Calu3 (cell line): ENCODE measurements at regions of chr4 and their contacts with region 1.

Region 1: DNA sequence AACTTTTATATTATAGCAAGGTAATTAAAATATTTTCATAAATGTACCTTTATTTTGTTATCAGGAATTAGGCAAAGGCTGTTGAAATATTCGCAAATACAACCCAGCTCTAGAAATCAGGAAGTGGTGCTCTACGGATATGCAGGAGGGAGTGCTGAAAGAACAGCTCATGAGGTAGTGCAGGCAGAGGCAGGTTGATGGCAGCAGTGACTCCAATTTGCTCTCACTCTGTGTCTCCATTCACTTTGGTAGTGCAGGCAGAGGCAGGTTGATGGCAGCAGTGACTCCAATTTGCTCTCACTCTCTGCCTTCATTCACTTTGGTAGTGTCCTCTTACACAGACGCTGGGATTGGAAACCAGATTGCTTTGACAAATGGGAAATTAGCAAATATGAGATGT is 277.9 kb downstream of the TRIML1 start:
- DNase-seq: no peak
- H3K4me3 Mint-ChIP-seq: no peak overlapping the region
- H3K27ac Mint-ChIP-seq: no peak overlapping the region
- H3K4me1 Mint-ChIP-seq: no peaks in the 10 kb centered on the region
- H3K27me3 Mint-ChIP-seq: no peaks in the 10 kb centered on the region
- CTCF ChIP-seq: no peak

Region 2: GRCh38 chr4:188341428-188341827 is 75.8 kb before region 1 on chr4:
- CTCF ChIA-PET with region 1: no interaction called
- intact Hi-C with region 1: no loop called
- DNase-seq: no peak
- H3K4me3 Mint-ChIP-seq: no peak overlapping the region
- H3K27ac Mint-ChIP-seq: no peak overlapping the region
- H3K4me1 Mint-ChIP-seq: no peaks in the 10 kb centered on the region
- H3K27me3 Mint-ChIP-seq: no peaks in the 10 kb centered on the region
- CTCF ChIP-seq: no peak

Region 3: DNA sequence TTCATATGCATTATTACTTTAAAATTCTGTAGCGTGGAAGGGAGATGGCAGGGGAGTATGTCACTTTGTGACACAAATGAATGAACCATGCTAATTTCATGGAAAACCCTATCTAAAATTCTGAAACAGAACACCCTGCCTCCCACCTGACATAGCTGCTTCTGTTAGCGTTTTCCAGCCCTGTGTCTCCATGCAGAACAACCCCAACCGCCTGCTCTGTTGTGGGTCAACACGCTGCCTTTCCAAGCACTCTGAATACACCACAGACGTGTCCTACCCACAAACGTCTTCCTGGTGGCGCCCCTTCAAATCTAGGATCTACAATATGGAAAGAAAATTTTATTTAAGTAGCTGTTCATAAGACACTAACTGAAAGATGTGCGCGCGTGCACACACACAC is 39.4 kb before region 1 on chr4:
- CTCF ChIA-PET with region 1: no interaction called
- intact Hi-C with region 1: loop called (anchors 2 kb)
- DNase-seq: no peak
- H3K4me3 Mint-ChIP-seq: no peak overlapping the region
- H3K27ac Mint-ChIP-seq: no peak overlapping the region
- H3K4me1 Mint-ChIP-seq: no peaks in the 10 kb centered on the region
- H3K27me3 Mint-ChIP-seq: no peaks in the 10 kb centered on the region
- CTCF ChIP-seq: no peak